ENCODE measurements at regions of chr15 and their contacts with region 1.

Region 1: GRCh38 chr15:94119923-94120775 is 111.2 kb upstream of the MCTP2 start:
- DNase-seq: peak; percentile 77
- ATAC-seq: peak; percentile 96

Region 2: GRCh38 chr15:92541291-92542200 is 1578.6 kb before region 1 on chr15:
- intact Hi-C with region 1: no loop called
- DNase-seq: no peak
- ATAC-seq: no peak

Region 3: DNA sequence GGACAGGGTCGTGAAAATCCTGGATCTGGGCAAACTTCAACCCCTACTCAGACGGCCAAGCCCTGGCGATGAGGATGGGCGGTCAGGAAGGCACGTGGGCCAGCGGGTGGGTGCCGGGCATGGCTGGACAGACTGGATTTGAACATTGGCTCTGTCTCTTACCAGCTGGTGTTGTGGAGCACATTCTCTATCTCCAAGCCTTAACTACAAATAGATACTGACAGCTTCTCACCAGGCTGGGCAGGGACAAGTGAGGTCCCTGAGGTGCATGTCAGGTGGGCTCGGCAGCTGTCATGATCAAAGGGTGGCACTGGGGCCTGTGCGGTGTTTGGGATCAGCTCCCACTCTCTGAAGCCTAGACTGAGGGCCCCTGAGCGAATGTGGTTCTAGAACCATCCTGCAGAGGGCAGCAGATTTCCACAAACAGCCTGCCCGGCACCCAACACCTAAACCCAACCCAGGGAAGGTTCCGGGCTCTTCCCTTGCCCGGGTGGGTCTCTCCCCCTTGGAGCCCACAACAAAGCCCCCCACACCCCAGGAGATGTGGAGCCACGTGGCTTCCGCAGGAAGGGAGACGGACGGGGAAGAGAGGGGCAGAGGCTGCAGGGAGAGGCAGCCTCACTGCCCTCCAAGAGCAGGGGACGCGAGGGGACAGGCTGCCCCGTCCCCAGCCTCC is 1089.6 kb before region 1 on chr15:
- intact Hi-C with region 1: loop called (anchors 5 kb)
- DNase-seq: peak; percentile 88
- ATAC-seq: peak; percentile 80